ENCODE measurements at regions of chr3 and their contacts with region 1.

Region 1: DNA sequence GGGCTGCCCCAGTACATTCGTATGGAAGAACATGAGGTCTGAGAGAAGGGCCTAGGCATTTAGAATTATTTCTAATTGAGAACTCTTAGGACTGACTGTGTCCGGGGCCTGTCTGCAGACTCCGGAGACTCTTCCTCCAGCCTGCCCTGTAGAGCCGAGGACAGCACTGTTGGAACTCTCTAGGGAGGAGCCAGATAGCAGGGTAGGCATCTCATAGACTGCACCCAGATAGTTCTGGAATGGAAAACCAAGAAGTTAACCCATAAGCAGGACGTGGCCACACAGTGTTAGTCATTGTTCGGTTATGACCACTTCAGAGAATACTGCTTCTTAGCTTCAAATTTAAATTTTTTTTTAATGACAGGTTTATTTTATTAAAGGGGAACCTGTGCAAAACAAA is 59.5 kb downstream of the SNRK start:
- DNase-seq: no peak
- H3K4me3 Mint-ChIP-seq: peak overlapping the region; percentile 61
- H3K27ac Mint-ChIP-seq: peak overlapping the region; percentile 90
- H3K4me1 Mint-ChIP-seq: peaks cover 60% of the 10 kb centered on the region
- H3K27me3 Mint-ChIP-seq: no peaks in the 10 kb centered on the region

Region 2: DNA sequence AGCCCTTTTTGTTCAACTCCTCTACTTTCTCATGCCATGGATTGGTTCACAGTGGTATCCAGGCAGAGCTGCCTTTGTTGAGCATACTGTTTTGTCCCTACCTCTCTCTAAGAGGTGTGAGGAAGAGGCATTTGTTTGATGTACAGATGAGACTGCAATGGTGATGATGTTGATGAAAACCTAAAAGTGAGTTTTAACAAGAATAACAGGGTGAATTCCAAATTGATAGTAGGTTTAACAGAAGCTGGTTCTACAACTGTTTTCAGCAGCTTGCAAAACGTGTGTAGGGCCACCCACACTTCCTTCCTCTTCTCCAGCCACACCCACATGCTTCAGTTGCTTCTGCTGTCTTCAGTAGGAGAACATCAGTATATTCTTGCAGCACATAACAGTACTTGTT is 49.3 kb before region 1 on chr3:
- intact Hi-C with region 1: loop called (anchors 2 kb)
- DNase-seq: peak; percentile 90
- H3K4me3 Mint-ChIP-seq: peak overlapping the region; percentile 74
- H3K27ac Mint-ChIP-seq: peak overlapping the region; percentile 88
- H3K4me1 Mint-ChIP-seq: peaks cover 65% of the 10 kb centered on the region
- H3K27me3 Mint-ChIP-seq: no peaks in the 10 kb centered on the region

Region 3: GRCh38 chr3:43389388-43390254 is 43.7 kb after region 1 on chr3:
- intact Hi-C with region 1: loop called (anchors 1 kb)
- DNase-seq: peak; percentile 93
- H3K4me3 Mint-ChIP-seq: peak overlapping the region; percentile 69
- H3K27ac Mint-ChIP-seq: peak overlapping the region; percentile 88
- H3K4me1 Mint-ChIP-seq: peaks cover 47% of the 10 kb centered on the region
- H3K27me3 Mint-ChIP-seq: peaks cover under 1% of the 10 kb centered on the region

Measured in activated CD4-positive, alpha-beta T cell treated with anti-CD3 and anti-CD28 coated beads, Interleukin-2, amount 10 ng/mL, durations not matched to agents 24 days and 14 days (primary cell).